Naive thymus-derived CD4-positive, alpha-beta T cell (primary cell): ENCODE measurements at regions of chr6 and their contacts with region 1.

Region 1: GRCh38 chr6:85612690-85613474 is 19.2 kb upstream of the SNX14 start:
- DNase-seq: no peak
- ATAC-seq: no peak
- H3K4me3 ChIP-seq: no peak overlapping the region
- H3K4me3 Mint-ChIP-seq: no peak overlapping the region
- H3K27ac ChIP-seq: no peak overlapping the region
- H3K27ac Mint-ChIP-seq: peak overlapping the region in 3 of 9 donors; percentile 19 to 61 (median 40)
- H3K4me1 ChIP-seq: no peaks in the 10 kb centered on the region
- H3K4me1 Mint-ChIP-seq: peaks cover 0 to 16% (median 12%) of the 10 kb centered on the region in 7 donors
- H3K27me3 ChIP-seq: no peaks in the 10 kb centered on the region
- H3K27me3 Mint-ChIP-seq: no peaks in the 10 kb centered on the region

Region 2: GRCh38 chr6:85628353-85628752 is 15.5 kb after region 1 on chr6:
- CTCF ChIA-PET with region 1: interaction called, 5 read pairs
- POLR2A ChIA-PET with region 1: interaction called, 3 read pairs
- intact Hi-C with region 1: loop called in 1 of 2 experiments (anchors 2 kb)
- DNase-seq: no peak
- ATAC-seq: no peak
- H3K4me3 ChIP-seq: no peak overlapping the region
- H3K4me3 Mint-ChIP-seq: peak overlapping the region in 3 of 10 donors; percentile 4 to 29 (median 5)
- H3K27ac ChIP-seq: no peak overlapping the region
- H3K27ac Mint-ChIP-seq: peak overlapping the region in 1 of 9 donors; percentile 13
- H3K4me1 ChIP-seq: peaks cover 0 to 11% of the 10 kb centered on the region in 2 donors
- H3K4me1 Mint-ChIP-seq: peaks cover 35 to 81% (median 74%) of the 10 kb centered on the region in 7 donors
- H3K27me3 ChIP-seq: no peaks in the 10 kb centered on the region
- H3K27me3 Mint-ChIP-seq: no peaks in the 10 kb centered on the region